ENCODE measurements at regions of chr3 and their contacts with region 1.

Region 1: DNA sequence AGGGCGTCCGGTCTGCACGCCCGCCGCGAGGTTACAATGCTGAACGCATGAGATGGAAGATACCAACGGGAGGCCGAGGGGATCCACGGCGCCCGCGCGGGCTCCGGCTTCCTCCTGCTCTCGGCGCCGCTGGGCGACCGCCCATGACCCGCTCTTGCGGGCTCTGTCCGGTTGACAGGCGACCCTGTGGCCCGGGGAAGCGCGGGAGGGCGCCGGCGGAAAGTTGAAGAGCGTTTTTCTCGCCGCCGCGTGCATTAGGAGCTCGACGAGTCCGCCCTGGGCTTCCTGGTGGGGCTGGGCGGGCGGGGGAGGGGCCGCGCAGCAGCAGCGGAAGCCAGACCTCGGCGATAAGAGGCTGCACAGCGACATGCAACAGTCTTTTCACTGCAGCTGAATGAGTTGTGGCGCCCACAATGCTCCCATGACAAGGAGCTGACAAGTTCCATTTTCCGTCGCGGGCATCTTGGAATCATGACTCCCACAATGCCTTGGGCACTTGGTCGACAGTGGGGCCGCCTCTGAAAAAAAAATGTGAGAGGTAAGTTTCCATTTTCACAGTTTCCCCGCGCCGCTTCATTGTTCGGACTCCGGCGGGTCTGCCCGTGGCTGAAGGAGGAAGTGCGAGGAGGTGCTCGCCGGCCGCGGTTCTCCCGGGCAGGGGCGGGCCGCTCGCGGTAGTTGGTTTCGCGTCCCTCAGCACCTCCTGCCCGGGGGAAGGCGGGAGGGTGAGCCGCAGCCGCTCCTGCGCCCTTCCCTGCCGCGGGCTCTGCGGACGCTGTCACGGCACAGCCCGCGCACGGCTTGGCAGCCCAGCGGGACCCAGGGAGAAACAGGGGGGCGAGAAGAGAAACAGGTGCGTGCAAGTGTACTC is at the start of gene MBNL1:
- DNase-seq: peak; percentile 79
- ATAC-seq: peak; percentile 73
- H3K4me3 Mint-ChIP-seq: peak within 1 kb of the TSS; percentile 98
- H3K27ac Mint-ChIP-seq: peak within 1 kb of the TSS; percentile 98
- H3K4me1 Mint-ChIP-seq: peaks cover 68% of the 10 kb centered on the region
- H3K27me3 Mint-ChIP-seq: no peaks in the 10 kb centered on the region
- CTCF ChIP-seq: no peak
- total RNA-seq, gene MBNL1: 489 and 561 TPM in 2 replicates

Region 2: GRCh38 chr3:150806185-150806835 is 1462.5 kb before region 1 on chr3:
- CTCF ChIA-PET with region 1: no interaction called
- POLR2A ChIA-PET with region 1: no interaction called
- intact Hi-C with region 1: no loop called
- DNase-seq: no peak
- ATAC-seq: no peak
- H3K4me3 Mint-ChIP-seq: no peak overlapping the region
- H3K27ac Mint-ChIP-seq: no peak overlapping the region
- H3K4me1 Mint-ChIP-seq: no peaks in the 10 kb centered on the region
- H3K27me3 Mint-ChIP-seq: no peaks in the 10 kb centered on the region
- CTCF ChIP-seq: no peak

Region 3: GRCh38 chr3:152193673-152194267 is 75.0 kb before region 1 on chr3:
- CTCF ChIA-PET with region 1: interaction called, 10 read pairs
- POLR2A ChIA-PET with region 1: interaction called, 179 read pairs
- intact Hi-C with region 1: loop called (anchors 1 kb)
- DNase-seq: no peak
- ATAC-seq: peak; percentile 53
- H3K4me3 Mint-ChIP-seq: peak overlapping the region; percentile 73
- H3K27ac Mint-ChIP-seq: peak overlapping the region; percentile 78
- H3K4me1 Mint-ChIP-seq: peaks cover 77% of the 10 kb centered on the region
- H3K27me3 Mint-ChIP-seq: no peaks in the 10 kb centered on the region
- CTCF ChIP-seq: no peak

Region 4: DNA sequence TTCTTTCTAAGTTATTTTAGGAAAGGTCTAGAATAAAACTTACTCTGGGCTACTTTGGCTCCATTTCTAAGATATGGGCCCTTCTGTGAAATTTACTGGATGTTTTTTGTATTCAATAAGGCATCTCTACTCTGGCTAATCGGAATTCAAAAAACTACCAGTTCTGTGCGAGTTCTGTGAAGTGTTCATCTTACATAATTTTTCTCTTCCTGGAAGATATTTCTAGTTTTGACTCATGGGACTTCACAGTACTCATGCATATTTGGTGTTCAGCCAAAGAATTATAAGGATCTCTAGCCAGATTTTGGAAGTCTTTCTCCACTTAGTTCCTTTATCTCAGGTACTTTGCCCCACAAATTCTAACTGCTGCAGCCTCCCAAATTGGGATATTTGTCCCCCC is 46.5 kb before region 1 on chr3:
- CTCF ChIA-PET with region 1: no interaction called
- POLR2A ChIA-PET with region 1: interaction called, 17 read pairs
- intact Hi-C with region 1: no loop called
- DNase-seq: no peak
- ATAC-seq: peak; percentile 32
- H3K4me3 Mint-ChIP-seq: peak overlapping the region; percentile 60
- H3K27ac Mint-ChIP-seq: peak overlapping the region; percentile 82
- H3K4me1 Mint-ChIP-seq: peaks cover 66% of the 10 kb centered on the region
- H3K27me3 Mint-ChIP-seq: no peaks in the 10 kb centered on the region
- CTCF ChIP-seq: no peak

Region 5: GRCh38 chr3:152258448-152259393 is 10.1 kb before region 1 on chr3:
- CTCF ChIA-PET with region 1: interaction called, 6 read pairs
- POLR2A ChIA-PET with region 1: interaction called, 149 read pairs
- intact Hi-C with region 1: loop called (anchors 1 kb)
- DNase-seq: no peak
- ATAC-seq: peak; percentile 23
- H3K4me3 Mint-ChIP-seq: peak overlapping the region; percentile 39
- H3K27ac Mint-ChIP-seq: peak overlapping the region; percentile 86
- H3K4me1 Mint-ChIP-seq: peaks cover 79% of the 10 kb centered on the region
- H3K27me3 Mint-ChIP-seq: no peaks in the 10 kb centered on the region
- CTCF ChIP-seq: no peak

Region 6: DNA sequence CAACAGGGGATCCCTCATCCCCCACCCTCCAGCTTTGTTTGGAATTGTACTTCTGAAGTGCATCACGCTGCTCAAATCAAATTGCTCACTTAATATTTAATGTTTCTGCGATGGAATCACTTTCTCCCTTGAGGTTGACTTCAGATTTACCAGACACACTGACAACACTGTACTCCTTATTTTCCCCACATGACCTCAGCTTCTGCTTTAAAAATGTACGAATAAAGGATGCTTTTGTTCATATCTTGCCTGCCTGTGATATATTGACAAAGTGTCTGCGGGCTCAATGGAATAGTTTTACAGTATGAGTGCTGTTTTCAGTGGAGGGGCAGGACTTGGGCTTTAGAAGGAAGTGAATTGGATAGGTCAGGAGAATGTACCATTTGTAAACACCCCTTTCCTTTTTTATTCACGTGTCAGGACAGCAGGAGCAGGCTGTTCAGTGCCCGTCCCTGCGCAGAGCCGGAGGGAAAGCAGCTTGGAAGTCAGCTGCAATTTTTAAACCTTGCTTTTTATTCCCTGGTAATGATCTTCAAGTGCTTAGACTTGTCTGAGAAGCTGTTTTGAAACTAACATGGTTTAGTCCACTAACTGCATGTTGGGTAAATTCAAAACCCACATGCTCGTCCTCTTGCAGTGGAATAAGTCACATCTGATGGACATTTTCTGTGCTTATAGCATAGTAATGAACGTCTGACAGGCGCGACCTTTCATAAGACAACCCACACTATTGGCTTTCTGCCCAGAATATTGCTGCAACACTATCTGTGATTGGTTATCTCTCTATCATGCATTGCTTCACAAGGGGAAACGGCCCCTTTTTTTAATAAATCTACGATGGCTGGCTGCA is 29.8 kb after region 1 on chr3:
- CTCF ChIA-PET with region 1: no interaction called
- POLR2A ChIA-PET with region 1: interaction called, 7 read pairs
- intact Hi-C with region 1: loop called (anchors 1 kb)
- DNase-seq: no peak
- ATAC-seq: peak; percentile 77
- H3K4me3 Mint-ChIP-seq: peak overlapping the region; percentile 58
- H3K27ac Mint-ChIP-seq: peak overlapping the region; percentile 61
- H3K4me1 Mint-ChIP-seq: peaks cover 84% of the 10 kb centered on the region
- H3K27me3 Mint-ChIP-seq: no peaks in the 10 kb centered on the region
- CTCF ChIP-seq: no peak

Region 7: GRCh38 chr3:152519376-152519775 is 250.6 kb after region 1 on chr3:
- CTCF ChIA-PET with region 1: no interaction called
- POLR2A ChIA-PET with region 1: interaction called, 5 read pairs
- intact Hi-C with region 1: loop called (anchors 5 kb)
- DNase-seq: no peak
- ATAC-seq: no peak
- H3K4me3 Mint-ChIP-seq: no peak overlapping the region
- H3K27ac Mint-ChIP-seq: peak overlapping the region; percentile 76
- H3K4me1 Mint-ChIP-seq: peaks cover 79% of the 10 kb centered on the region
- H3K27me3 Mint-ChIP-seq: no peaks in the 10 kb centered on the region
- CTCF ChIP-seq: no peak